Endothelial cell of umbilical vein (primary cell): ENCODE measurements at regions of chr11 and their contacts with region 1.

Region 1: GRCh38 chr11:43944761-43945311 is 2.4 kb downstream of the C11orf96 start:
- DNase-seq: peak; percentile 51
- H3K4me3 ChIP-seq: no peak overlapping the region
- H3K27ac ChIP-seq: no peak overlapping the region
- H3K4me1 ChIP-seq: peaks cover 13% of the 10 kb centered on the region
- H3K27me3 ChIP-seq: peaks cover 15 to 32% of the 10 kb centered on the region in 2 experiments
- CTCF ChIP-seq: peak; percentile 82 to 87
- POLR2A ChIP-seq: no peak

Region 2: GRCh38 chr11:43905813-43906241 is 39.0 kb before region 1 on chr11:
- CTCF ChIA-PET with region 1: interaction called, 25 read pairs
- POLR2A ChIA-PET with region 1: interaction called, 6 read pairs
- dilution Hi-C with region 1: no loop called
- intact Hi-C with region 1: no loop called
- DNase-seq: peak; percentile 93
- H3K4me3 ChIP-seq: no peak overlapping the region
- H3K27ac ChIP-seq: peak overlapping the region; percentile 42
- H3K4me1 ChIP-seq: peaks cover 16% of the 10 kb centered on the region
- H3K27me3 ChIP-seq: no peaks in the 10 kb centered on the region
- CTCF ChIP-seq: no peak
- POLR2A ChIP-seq: no peak

Region 3: GRCh38 chr11:43925932-43926505 is 18.8 kb before region 1 on chr11:
- CTCF ChIA-PET with region 1: interaction called, 43 read pairs
- POLR2A ChIA-PET with region 1: interaction called, 8 read pairs
- dilution Hi-C with region 1: no loop called
- intact Hi-C with region 1: loop called (anchors 2 kb)
- DNase-seq: peak; percentile 52
- H3K4me3 ChIP-seq: no peak overlapping the region
- H3K27ac ChIP-seq: peak overlapping the region; percentile 2
- H3K4me1 ChIP-seq: peaks cover 41% of the 10 kb centered on the region
- H3K27me3 ChIP-seq: no peaks in the 10 kb centered on the region
- CTCF ChIP-seq: no peak
- POLR2A ChIP-seq: no peak

Region 4: DNA sequence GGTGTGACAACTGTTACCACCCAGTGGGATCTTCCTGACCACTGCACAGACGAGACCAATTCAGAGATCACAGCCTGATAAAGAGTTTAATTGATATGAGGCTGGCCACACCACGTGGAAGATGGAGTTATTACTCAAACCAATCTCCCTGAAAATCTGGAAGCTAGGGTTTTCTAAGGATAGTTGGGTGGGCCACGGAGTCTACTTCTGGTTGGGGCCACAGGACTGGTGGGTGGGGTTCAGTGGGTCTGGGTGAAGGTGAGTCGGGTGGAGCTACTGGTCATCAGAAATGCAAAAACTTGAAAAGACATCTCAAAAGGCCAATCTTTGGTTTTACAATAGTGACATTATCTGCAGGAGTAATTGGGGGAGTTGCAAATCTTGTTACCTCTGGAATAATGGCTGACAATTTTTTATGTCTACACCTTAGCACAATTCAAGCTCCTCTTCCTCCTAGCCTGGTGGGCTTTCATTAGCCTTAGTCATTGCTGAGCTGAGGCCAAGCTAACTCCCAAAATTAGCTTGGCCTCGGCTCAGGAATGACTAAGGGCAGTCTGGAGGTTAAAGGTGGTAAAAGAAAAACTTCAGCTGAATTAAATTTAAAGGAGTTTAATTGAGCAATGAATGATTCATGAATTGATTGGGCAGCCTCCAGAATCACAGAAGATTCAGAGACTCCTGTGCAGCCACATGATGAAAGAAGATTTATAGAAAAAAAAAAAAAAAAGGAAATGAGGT is 10.7 kb after region 1 on chr11:
- CTCF ChIA-PET with region 1: interaction called, 11 read pairs
- POLR2A ChIA-PET with region 1: no interaction called
- dilution Hi-C with region 1: no loop called
- intact Hi-C with region 1: no loop called
- DNase-seq: no peak
- H3K4me3 ChIP-seq: no peak overlapping the region
- H3K27ac ChIP-seq: no peak overlapping the region
- H3K4me1 ChIP-seq: no peaks in the 10 kb centered on the region
- H3K27me3 ChIP-seq: peaks cover 6 to 7% of the 10 kb centered on the region in 2 experiments
- CTCF ChIP-seq: no peak
- POLR2A ChIP-seq: no peak

Region 5: GRCh38 chr11:43979571-43980190 is 34.8 kb after region 1 on chr11:
- CTCF ChIA-PET with region 1: no interaction called
- POLR2A ChIA-PET with region 1: no interaction called
- dilution Hi-C with region 1: no loop called
- intact Hi-C with region 1: no loop called
- DNase-seq: no peak
- H3K4me3 ChIP-seq: no peak overlapping the region
- H3K27ac ChIP-seq: no peak overlapping the region
- H3K4me1 ChIP-seq: no peaks in the 10 kb centered on the region
- H3K27me3 ChIP-seq: peaks cover 1 to 3% of the 10 kb centered on the region in 2 experiments
- CTCF ChIP-seq: no peak
- POLR2A ChIP-seq: no peak

Region 6: DNA sequence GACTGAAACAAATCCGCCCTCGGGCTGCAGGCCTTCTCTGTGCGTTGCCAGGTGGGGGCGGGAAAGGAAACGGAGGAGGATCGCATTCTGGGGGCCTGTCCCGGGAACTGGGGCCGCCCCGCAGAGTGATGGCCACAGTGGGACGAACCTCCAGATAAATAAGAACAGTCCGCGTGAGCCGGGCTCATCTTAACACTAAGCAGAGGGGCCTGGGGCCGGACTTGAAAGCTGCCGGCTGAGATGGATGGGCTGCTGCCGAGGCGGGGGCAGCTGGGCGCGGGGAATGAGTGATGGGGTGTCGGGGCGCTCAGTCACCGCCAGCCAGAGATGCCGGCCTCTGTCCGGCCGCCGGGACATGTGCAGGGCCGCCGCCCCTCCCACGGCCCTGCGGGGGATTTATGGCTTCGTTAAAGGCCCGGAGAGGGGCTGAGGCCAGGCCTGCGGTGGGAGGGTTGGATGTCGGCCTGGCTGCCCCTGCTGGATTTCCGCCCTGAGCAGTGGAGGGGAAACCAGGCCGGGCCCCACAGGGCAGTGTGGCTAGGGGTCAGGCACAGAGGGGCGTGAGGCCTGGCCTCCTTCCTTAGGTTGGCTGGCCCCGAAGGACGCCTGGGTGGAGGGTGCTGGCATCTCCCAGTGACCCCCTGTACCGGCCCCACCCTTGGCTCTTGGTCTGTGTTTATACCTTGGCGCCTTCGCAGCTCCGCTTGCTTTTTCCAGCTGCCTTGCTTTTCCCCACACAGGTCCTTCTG is 575.3 kb after region 1 on chr11:
- CTCF ChIA-PET with region 1: no interaction called
- POLR2A ChIA-PET with region 1: no interaction called
- dilution Hi-C with region 1: no loop called
- intact Hi-C with region 1: no loop called
- DNase-seq: no peak
- H3K4me3 ChIP-seq: no peak overlapping the region
- H3K27ac ChIP-seq: no peak overlapping the region
- H3K4me1 ChIP-seq: no peaks in the 10 kb centered on the region
- H3K27me3 ChIP-seq: peaks cover 11 to 24% of the 10 kb centered on the region in 2 experiments
- CTCF ChIP-seq: no peak
- POLR2A ChIP-seq: no peak